ENCODE measurements at regions of chr6 and their contacts with region 1.

Region 1: GRCh38 chr6:10694302-10695085 is at the starts of genes C6orf52 and PAK1IP1:
- DNase-seq: peak; percentile 98
- H3K4me3 Mint-ChIP-seq: peak within 1 kb of the TSS; percentile 87
- H3K27ac Mint-ChIP-seq: peak within 1 kb of the TSS; percentile 99
- H3K4me1 Mint-ChIP-seq: peaks cover 32% of the 10 kb centered on the region
- H3K27me3 Mint-ChIP-seq: no peaks in the 10 kb centered on the region
- total RNA-seq, gene C6orf52: 2.2 and 3.0 TPM in 2 replicates
- total RNA-seq, gene PAK1IP1: 39.1 TPM in 2 replicates

Region 2: GRCh38 chr6:10510592-10511367 is 183.7 kb before region 1 on chr6:
- intact Hi-C with region 1: loop called (anchors 1 kb)
- DNase-seq: peak; percentile 87
- H3K4me3 Mint-ChIP-seq: no peak overlapping the region
- H3K27ac Mint-ChIP-seq: no peak overlapping the region
- H3K4me1 Mint-ChIP-seq: peaks cover 6% of the 10 kb centered on the region
- H3K27me3 Mint-ChIP-seq: peaks cover 7% of the 10 kb centered on the region

Region 3: GRCh38 chr6:10528170-10528981 is 166.1 kb before region 1 on chr6:
- intact Hi-C with region 1: loop called (anchors 1 kb)
- DNase-seq: peak; percentile 81
- H3K4me3 Mint-ChIP-seq: peak overlapping the region; percentile 92
- H3K27ac Mint-ChIP-seq: peak overlapping the region; percentile 89
- H3K4me1 Mint-ChIP-seq: peaks cover 48% of the 10 kb centered on the region
- H3K27me3 Mint-ChIP-seq: no peaks in the 10 kb centered on the region

Region 4: DNA sequence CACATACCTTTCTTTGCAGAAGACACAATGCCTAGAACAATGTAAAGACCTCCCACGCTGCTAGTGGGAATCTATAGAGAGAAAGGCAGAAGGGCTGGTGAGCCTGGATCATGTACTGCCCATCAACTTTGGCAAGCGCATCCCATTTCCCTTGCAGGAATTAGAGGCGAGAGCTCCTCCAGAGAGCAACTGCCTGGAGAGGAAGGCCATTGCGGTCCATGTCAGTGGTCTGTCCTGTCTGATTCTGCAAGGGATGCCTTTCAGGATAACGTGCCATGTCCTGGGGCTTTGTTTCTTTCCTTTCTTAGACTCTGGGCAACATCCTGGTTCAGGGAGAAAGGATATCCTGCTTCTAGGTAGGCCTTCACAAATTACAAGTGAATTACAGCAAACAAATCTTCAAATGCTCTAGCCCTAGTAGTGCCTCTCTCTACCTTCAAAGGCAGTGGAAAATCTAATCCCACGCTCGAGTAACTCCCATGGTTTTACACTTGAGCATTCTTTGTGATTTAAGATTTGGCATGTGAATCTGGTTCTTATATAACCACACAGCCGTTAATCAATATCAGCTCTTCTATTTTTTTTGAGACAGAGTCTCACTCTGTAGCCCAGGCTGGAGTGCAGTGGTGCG is 134.9 kb before region 1 on chr6:
- intact Hi-C with region 1: no loop called
- DNase-seq: no peak
- H3K4me3 Mint-ChIP-seq: no peak overlapping the region
- H3K27ac Mint-ChIP-seq: no peak overlapping the region
- H3K4me1 Mint-ChIP-seq: no peaks in the 10 kb centered on the region
- H3K27me3 Mint-ChIP-seq: no peaks in the 10 kb centered on the region

Region 5: DNA sequence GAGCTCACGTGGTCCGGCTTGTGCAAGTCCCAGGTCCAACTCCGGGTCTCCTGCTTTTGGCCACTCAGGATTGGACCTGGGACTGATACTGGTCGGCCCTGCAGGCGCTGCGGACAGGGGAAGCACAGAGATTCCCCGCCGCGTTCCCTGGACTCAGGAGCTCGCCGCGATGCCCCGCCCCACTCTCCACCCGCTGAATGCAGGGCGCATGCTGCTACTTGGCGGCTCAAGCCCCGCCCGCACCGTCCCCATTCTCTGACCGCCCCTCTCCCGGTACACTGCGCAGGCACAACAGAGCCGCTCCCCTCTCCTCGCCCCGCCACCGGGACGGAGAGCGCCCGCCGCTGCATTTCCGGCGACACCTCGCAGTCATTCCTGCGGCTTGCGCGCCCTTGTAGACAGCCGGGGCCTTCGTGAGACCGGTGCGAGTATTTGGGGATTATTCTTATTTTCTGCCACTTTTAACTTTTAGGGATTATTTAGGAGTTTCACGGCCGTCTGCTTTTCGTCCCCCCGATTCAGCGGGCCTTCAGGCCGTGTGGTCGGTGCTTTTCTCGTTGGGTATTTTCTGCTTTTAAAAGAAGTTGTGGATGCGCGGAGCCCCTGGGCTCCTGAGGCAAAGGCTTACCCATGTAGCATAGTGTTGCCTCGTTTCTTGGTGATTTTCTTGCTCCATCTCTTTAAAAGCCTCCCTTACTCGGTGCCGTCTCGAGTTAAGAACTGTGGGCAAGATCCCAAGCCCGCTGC is 28.5 kb after region 1 on chr6 and contains the start of gene TMEM14C:
- intact Hi-C with region 1: loop called (anchors 1 kb)
- DNase-seq: peak; percentile 97
- H3K4me3 Mint-ChIP-seq: peak within 1 kb of the TSS; percentile 89
- H3K27ac Mint-ChIP-seq: peak within 1 kb of the TSS; percentile 93
- H3K4me1 Mint-ChIP-seq: peaks cover 27% of the 10 kb centered on the region
- H3K27me3 Mint-ChIP-seq: no peaks in the 10 kb centered on the region
- total RNA-seq, gene TMEM14C: 65.0 and 67.7 TPM in 2 replicates

Region 6: DNA sequence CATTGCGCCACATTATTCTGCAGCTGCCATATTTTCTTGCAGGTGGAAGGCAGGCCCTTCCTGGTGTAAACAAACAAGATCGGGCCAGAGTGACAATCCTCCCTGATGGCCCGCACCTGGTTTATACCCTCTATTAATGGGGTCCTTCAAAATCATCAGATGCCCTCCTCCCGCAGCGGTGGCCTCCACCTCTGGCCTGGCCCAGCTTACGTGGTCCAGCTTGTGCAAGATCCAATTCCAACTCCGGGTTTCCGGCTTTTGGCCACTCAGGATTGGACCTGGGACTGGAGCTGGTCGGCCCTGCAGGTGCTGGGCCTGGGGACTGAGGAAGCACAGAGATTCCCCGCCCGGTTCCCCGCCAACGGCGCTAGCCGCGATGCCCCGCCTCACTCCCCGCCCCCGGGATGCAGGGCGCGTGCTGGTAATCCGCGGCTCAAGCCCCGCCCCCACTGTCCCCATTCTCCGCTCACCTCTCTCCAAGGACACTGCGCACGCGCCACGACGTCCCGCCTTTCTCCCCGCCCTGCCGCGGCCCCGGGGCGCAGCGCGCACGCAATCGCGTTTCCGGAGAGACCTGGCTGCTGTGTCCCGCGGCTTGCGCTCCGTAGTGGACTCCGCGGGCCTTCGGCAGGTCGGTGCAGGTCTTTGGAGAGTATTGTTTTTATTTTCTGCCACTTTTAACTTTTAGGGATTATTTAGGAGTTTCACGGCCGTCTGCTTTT is 52.9 kb after region 1 on chr6 and contains the start of gene TMEM14B:
- intact Hi-C with region 1: loop called (anchors 1 kb)
- DNase-seq: peak; percentile 100
- H3K4me3 Mint-ChIP-seq: peak within 1 kb of the TSS; percentile 90
- H3K27ac Mint-ChIP-seq: peak within 1 kb of the TSS; percentile 88
- H3K4me1 Mint-ChIP-seq: peaks cover 43% of the 10 kb centered on the region
- H3K27me3 Mint-ChIP-seq: no peaks in the 10 kb centered on the region
- total RNA-seq, gene TMEM14B: 94.0 and 98.0 TPM in 2 replicates

Measured in activated CD4-positive, alpha-beta T cell treated with anti-CD3 and anti-CD28 coated beads, Interleukin-2, amount 10 ng/mL, durations not matched to agents 24 days and 14 days (primary cell).